ENCODE measurements at regions of chr12 and their contacts with region 1.

Region 1: DNA sequence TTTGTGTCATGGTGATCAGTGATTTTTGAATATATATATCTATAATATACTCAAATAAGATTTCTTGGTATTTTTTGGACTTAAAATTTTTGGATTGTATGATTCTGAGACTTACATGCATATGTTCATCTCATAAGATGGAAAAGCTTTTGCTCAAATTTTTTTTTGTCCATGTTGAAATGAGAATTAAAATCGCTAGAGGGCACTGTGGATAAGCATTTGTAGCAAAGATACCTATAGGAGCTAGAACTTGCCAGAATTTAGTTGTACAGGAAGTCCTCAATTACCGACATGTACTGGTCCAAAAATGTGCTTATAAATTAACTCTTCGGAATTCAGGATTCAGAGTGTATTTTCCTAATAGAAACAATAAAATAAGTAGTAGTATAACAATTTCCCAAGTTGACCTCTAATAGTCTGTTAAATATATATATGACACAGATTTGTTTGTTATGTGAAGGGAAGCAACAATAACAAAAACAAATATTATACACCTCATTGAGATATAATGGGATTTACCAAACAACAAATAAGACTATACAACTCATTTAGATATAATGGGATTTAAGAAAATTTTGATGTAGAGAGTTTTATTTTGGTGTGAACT is 179.6 kb downstream of the TMEM117 start:
- DNase-seq: no peak
- H3K4me3 ChIP-seq: no peak overlapping the region
- H3K27ac ChIP-seq: no peak overlapping the region
- H3K4me1 ChIP-seq: no peaks in the 10 kb centered on the region; a peak in 1 of 7 replicates
- H3K27me3 ChIP-seq: no peaks in the 10 kb centered on the region
- CTCF ChIP-seq: peak in 2 of 3 experiments; percentile 33 to 47; a peak in 2 of 4 replicates
- EP300 ChIP-seq: no peak
- POLR2A ChIP-seq: no peak
- RAD21 ChIP-seq: peak; percentile 79 to 83

Region 2: GRCh38 chr12:44000309-44000952 is 15.0 kb before region 1 on chr12:
- CTCF ChIA-PET with region 1: interaction called, 34 read pairs
- POLR2A ChIA-PET with region 1: no interaction called
- DNase-seq: peak; percentile 56 to 58
- H3K4me3 ChIP-seq: no peak overlapping the region
- H3K27ac ChIP-seq: no peak overlapping the region
- H3K4me1 ChIP-seq: no peaks in the 10 kb centered on the region
- H3K27me3 ChIP-seq: no peaks in the 10 kb centered on the region
- CTCF ChIP-seq: peak; percentile 77 to 85 (median 81)
- EP300 ChIP-seq: no peak
- POLR2A ChIP-seq: no peak
- RAD21 ChIP-seq: peak; percentile 77 to 84

Region 3: GRCh38 chr12:44317651-44318126 is 302.3 kb after region 1 on chr12:
- CTCF ChIA-PET with region 1: interaction called, 11 read pairs
- POLR2A ChIA-PET with region 1: no interaction called
- DNase-seq: peak in 1 of 2 experiments; percentile 52
- H3K4me3 ChIP-seq: no peak overlapping the region
- H3K27ac ChIP-seq: no peak overlapping the region
- H3K4me1 ChIP-seq: no peaks in the 10 kb centered on the region
- H3K27me3 ChIP-seq: no peaks in the 10 kb centered on the region
- CTCF ChIP-seq: peak in 2 of 3 experiments; percentile 64 to 82; a peak in 3 of 4 replicates
- EP300 ChIP-seq: no peak
- POLR2A ChIP-seq: no peak
- RAD21 ChIP-seq: peak; percentile 71 to 83

Region 4: DNA sequence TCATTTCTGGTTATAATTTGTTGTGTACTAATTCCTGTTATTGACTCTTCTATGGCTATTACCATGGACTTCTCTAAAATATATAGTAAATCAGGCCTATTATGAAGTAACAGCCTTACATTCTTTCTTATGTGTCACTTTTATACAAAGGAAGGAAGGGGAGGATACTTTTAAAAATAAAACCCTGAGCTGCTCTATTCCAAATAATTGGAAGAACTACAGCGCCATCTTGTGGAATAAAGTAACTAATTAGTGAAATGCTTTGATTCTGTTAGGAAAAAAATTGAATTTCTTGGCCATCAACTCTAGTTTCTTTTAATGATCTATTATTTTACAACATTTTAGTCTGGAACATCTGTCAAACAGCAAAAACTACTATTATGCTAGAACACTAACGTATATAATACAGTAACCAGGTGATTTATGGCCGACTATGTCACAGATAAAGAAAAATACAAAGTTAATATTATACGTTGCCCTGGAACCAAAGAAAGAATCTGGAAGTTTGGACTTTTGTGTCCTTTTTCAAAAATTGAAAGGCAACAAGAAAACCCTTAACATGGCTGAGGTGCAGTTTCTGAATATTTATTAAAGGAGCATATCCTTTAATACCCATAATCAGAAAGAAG is 915.6 kb after region 1 on chr12:
- CTCF ChIA-PET with region 1: interaction called, 19 read pairs
- POLR2A ChIA-PET with region 1: no interaction called
- DNase-seq: no peak
- H3K4me3 ChIP-seq: peak overlapping the region in 1 of 4 experiments; percentile 1; a peak in 1 of 8 replicates
- H3K27ac ChIP-seq: no peak overlapping the region
- H3K4me1 ChIP-seq: no peaks in the 10 kb centered on the region
- H3K27me3 ChIP-seq: no peaks in the 10 kb centered on the region
- CTCF ChIP-seq: peak in 2 of 3 experiments; percentile 34 to 45; a peak in 2 of 4 replicates
- EP300 ChIP-seq: no peak
- POLR2A ChIP-seq: no peak
- RAD21 ChIP-seq: peak; percentile 63 to 73

Measured in H1 (cell line).